Sciatic nerve (tissue), 2 donors: ENCODE measurements at regions of chr19 and their contacts with region 1.

Region 1: DNA sequence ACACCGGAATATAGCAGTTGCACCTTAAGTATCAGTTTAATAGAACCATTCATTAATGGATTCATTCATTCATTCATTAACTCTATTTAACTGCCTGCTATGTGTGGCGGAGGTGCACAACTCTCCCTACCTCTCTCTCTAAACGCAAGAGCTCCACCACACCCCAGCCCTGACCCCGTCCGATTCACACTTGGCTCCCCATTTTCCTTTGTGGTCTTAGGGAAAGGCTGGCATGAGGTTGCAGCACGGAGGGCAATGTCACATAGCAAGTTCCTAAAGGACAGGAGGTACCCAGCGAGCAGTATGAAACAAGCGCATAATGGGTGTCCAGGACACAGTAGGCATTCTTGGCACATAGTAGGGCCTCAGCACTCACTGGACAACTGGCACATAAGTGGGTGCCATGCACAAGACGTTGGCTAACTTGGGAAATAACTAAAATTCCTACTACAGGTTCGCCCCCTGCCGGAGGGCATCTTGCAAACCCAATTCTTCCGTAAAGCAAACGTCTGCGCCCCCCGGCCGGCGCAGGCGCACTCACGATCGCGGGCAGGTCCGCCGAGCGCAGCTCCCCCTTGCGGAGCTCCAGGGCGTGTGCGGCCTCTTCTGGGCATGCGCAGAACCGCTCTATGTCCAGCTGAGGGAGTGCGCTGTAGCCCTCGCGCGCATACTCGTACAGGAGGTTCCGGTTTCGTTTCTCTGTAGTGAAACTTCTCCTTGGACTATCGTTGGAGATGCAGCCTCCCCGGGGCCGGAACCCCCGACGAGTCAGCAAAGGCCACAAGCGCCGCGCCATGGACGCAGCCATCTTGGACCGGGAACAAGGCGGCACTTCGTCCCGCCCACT is at the start of gene SARS2:
- DNase-seq: peak; percentile 94
- ATAC-seq: peak; percentile 95
- total RNA-seq, gene SARS2: 17.9 TPM

Region 2: GRCh38 chr19:38514812-38515633 is 415.1 kb before region 1 on chr19:
- intact Hi-C with region 1: loop called (anchors 10 kb)
- DNase-seq: peak; percentile 79
- ATAC-seq: peak; percentile 86